Heart right ventricle (tissue), 16 donors: ENCODE measurements at regions of chrX and their contacts with region 1.

Region 1: GRCh38 chrX:100512471-100512870 is 72.3 kb upstream of the TNMD start:
- DNase-seq: no peak
- ATAC-seq: no peak
- H3K4me3 ChIP-seq: no peak overlapping the region
- H3K27ac ChIP-seq: no peak overlapping the region
- H3K4me1 ChIP-seq: no peaks in the 10 kb centered on the region
- H3K27me3 ChIP-seq: peaks cover 0 to 23% (median 0%) of the 10 kb centered on the region in 7 donors
- CTCF ChIP-seq: peak; percentile 43 to 75 (median 57)

Region 2: DNA sequence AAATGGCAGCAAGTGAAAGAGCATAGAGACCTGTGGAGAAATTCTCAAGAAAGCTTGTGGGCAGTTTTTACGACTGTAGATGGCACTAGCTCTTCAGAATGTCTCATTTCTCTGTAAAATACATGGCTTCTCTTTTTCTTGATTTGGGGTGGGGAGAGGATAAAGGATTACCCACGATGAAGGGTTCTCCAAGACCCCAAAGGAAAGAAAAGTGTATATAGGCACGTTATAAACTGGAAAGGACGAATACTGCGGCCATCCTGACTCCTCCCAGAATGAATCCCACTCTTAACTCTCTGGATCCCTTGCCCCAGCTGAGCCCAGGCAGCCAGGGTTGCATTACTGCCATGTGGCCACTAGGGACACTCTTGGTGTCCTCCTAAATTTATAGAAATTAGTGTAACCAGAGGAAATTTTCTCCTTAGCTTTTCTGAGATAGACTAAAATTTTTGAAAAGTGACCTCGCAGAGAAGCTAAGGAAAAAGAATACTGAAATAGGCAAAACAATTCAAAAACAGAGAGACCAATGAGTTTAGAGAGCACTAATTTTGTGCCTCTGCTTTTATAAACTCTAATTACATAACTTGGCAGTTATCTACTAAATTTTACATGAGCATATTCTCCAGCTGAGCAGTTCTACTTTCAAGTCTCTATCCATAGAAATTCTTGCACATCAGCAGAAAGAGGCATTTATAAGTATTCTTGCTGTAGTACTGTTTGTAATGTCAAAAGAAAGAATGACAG is 64.6 kb before region 1 on chrX:
- intact Hi-C with region 1: loop called in 1 of 10 experiments (anchors 10 kb)
- DNase-seq: peak; percentile 15 to 30
- ATAC-seq: peak in 7 of 8 donors; percentile 44 to 78 (median 58)
- H3K4me3 ChIP-seq: peak overlapping the region in 6 of 10 donors; percentile 17 to 45 (median 32)
- H3K27ac ChIP-seq: peak overlapping the region in 1 of 10 donors; percentile 19
- H3K4me1 ChIP-seq: peaks cover 0 to 14% (median 4%) of the 10 kb centered on the region in 9 donors
- H3K27me3 ChIP-seq: peaks cover 0 to 21% (median 0%) of the 10 kb centered on the region in 7 donors
- CTCF ChIP-seq: peak; percentile 51 to 92 (median 72)

Region 3: DNA sequence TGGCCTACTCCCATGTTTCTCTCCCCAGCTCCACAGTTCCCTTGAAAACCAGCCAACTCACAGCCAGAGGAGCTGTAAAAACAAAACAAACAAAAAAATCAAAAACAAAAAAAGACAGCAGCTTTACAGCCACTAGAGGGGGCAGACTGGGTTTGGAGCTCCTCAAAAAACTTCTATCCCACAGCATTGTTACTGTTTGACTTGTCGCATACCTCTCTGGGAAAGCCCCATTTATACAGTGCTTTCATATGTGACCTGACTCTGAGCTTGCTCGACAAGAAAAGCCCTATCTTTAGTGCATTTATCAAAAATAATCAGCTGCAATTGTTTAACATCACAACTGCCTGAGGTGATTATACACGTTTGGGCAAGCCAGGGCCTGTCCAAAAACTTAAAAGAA is 102.5 kb after region 1 on chrX:
- intact Hi-C with region 1: loop called in 1 of 10 experiments (anchors 10 kb)
- DNase-seq: peak in 1 of 2 donors; percentile 12
- ATAC-seq: no peak
- H3K4me3 ChIP-seq: no peak overlapping the region
- H3K27ac ChIP-seq: no peak overlapping the region
- H3K4me1 ChIP-seq: no peaks in the 10 kb centered on the region
- H3K27me3 ChIP-seq: peaks cover 0 to 74% (median 0%) of the 10 kb centered on the region in 7 donors
- CTCF ChIP-seq: peak in 8 of 9 donors; percentile 10 to 55 (median 44)

Region 4: DNA sequence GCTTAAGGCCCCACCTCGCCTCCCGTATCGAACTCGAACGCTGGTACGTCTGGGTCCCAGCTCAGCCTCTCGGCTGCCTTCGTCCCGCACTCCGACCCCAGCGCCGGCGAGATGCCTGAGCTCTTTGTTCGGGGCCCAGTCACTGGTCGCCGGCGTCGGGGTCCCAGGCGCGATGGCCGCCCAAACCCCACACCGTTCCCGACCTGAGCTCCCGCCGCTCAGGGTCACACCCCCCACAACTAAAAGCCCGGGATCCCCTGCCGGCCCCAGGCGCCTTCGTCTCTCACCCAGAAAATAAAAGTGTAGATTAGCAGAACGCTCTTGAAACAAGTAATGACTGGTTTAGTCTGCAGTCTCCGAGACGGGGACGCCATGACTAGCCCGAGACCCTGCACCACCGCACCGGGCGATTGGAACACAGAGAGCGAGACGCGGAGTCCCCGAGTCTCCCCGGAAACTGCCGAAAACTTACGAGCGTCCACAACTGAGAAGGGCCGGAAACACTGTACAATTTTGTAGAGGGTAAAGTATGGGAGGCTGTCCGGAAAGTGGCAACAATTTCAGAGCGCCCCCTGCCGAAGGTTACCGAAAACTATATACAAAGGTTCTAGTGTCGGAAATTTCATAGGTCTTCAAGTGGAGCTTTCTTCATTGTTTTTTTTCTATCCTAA is 124.0 kb after region 1 on chrX and contains the start of gene TSPAN6:
- intact Hi-C with region 1: loop called in 3 of 10 experiments (anchors 10 kb)
- DNase-seq: peak; percentile 80 to 83
- ATAC-seq: peak; percentile 96 to 99 (median 98)
- H3K4me3 ChIP-seq: peak within 1 kb of the TSS; percentile 30 to 75 (median 61)
- H3K27ac ChIP-seq: peak within 1 kb of the TSS in 9 of 10 donors; percentile 2 to 72 (median 39)
- H3K4me1 ChIP-seq: peaks cover 0 to 3% (median 0%) of the 10 kb centered on the region in 9 donors
- H3K27me3 ChIP-seq: peaks cover 0 to 85% (median 0%) of the 10 kb centered on the region in 7 donors
- CTCF ChIP-seq: peak; percentile 7 to 67 (median 55)
- total RNA-seq, gene TSPAN6: 3.0 to 6.5 (median 5.5) TPM

Region 5: GRCh38 chrX:100768679-100769338 is 256.3 kb after region 1 on chrX:
- intact Hi-C with region 1: loop called in 1 of 10 experiments (anchors 10 kb)
- DNase-seq: peak; percentile 65 to 73
- ATAC-seq: peak in 4 of 8 donors; percentile 23 to 69 (median 35)
- H3K4me3 ChIP-seq: no peak overlapping the region
- H3K27ac ChIP-seq: no peak overlapping the region
- H3K4me1 ChIP-seq: no peaks in the 10 kb centered on the region
- H3K27me3 ChIP-seq: peaks cover 0 to 18% (median 0%) of the 10 kb centered on the region in 7 donors
- CTCF ChIP-seq: peak; percentile 87 to 99 (median 89)